ENCODE measurements at regions of chr2 and their contacts with region 1.

Region 1: GRCh38 chr2:112726497-112727190 is 5.8 kb downstream of the NT5DC4 start:
- DNase-seq: peak; percentile 86
- ATAC-seq: peak; percentile 96
- H3K4me3 ChIP-seq: no peak overlapping the region
- H3K27ac ChIP-seq: no peak overlapping the region
- H3K4me1 ChIP-seq: peaks cover 1% of the 10 kb centered on the region; the same call in 1 of the 2 replicates
- H3K27me3 ChIP-seq: no peaks in the 10 kb centered on the region
- CTCF ChIP-seq: peak; percentile 99
- POLR2A ChIP-seq: peak; percentile 49; the same call in 1 of the 2 replicates
- RAD21 ChIP-seq: peak; percentile 100

Region 2: DNA sequence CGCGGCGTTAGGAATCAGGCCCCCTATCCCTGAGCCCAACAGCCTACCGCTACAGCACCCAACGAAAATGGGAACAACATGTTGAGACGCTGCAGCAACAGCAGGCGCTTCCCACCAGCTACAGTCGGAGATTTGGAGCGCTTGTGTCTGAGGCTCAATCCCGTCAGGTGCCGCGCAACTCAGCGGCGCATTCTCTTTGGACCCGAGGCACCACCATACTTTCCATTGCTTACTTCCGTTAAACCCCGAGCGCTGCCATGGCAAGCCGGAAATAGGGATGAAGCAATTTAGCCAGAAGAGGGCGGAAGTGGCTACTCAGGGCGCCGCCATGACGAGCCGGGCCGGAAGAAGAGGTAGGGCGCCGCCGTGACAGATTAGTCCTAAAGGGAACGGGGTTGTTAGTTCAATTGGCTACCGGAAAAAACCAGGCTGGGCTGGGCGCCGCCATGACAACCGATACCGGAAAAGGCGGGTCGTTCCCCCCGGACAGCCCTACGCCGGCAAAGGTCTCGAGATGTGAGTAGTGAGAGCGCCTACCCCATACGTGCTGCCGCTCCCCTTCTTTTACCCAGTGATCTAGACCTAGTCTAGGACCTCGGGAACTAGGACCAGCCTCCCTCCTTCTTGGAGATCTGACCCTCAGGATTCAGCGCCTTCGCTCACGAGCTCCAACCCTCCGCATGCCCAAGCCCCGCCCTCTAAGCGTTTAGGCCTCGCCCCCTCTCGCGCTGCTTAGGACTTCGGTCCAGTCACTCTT is 142.3 kb before region 1 on chr2 and contains the start of gene CHCHD5:
- CTCF ChIA-PET with region 1: interaction called, 4 read pairs
- POLR2A ChIA-PET with region 1: no interaction called
- dilution Hi-C with region 1: no loop called
- in situ Hi-C with region 1: no loop called
- intact Hi-C with region 1: loop called (anchors 5 kb)
- DNase-seq: peak; percentile 94
- ATAC-seq: peak; percentile 89
- H3K4me3 ChIP-seq: peak within 1 kb of the TSS; percentile 56
- H3K27ac ChIP-seq: peak within 1 kb of the TSS; percentile 84
- H3K4me1 ChIP-seq: peaks cover 6% of the 10 kb centered on the region
- H3K27me3 ChIP-seq: no peaks in the 10 kb centered on the region
- CTCF ChIP-seq: peak; percentile 25; the same call in 1 of the 2 replicates
- POLR2A ChIP-seq: peak; percentile 89
- RAD21 ChIP-seq: no peak
- total RNA-seq, gene CHCHD5: 4.8 and 8.1 TPM in 2 replicates

Region 3: DNA sequence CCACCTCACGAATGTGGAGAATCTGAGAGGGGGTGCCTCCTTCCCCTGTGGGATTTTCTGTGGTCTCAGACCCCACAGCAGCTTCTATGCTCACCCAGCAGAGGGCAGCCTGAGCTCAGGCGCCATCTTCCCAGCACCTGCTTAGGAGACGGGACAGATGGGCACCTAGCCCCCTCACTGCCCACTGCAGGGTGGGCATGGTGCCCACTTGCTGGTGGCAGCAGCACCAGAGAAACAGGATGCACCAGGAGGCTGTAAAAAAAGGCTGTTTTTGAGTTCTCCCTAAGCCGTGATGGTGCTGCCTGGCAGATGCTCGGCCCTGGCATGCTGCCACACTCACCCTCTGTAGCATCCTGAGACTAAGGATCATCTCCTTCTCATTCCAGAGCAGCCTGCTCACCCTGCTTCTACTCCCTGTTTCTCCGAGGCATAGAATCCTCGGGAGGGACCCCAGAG is 100.0 kb before region 1 on chr2:
- CTCF ChIA-PET with region 1: interaction called, 15 read pairs
- POLR2A ChIA-PET with region 1: no interaction called
- dilution Hi-C with region 1: no loop called
- in situ Hi-C with region 1: no loop called
- intact Hi-C with region 1: loop called (anchors 1 kb)
- DNase-seq: peak; percentile 68
- ATAC-seq: peak; percentile 54
- H3K4me3 ChIP-seq: no peak overlapping the region; the same call in 1 of the 2 replicates
- H3K27ac ChIP-seq: peak overlapping the region; percentile 79
- H3K4me1 ChIP-seq: peaks cover 29% of the 10 kb centered on the region
- H3K27me3 ChIP-seq: no peaks in the 10 kb centered on the region
- CTCF ChIP-seq: peak; percentile 79
- POLR2A ChIP-seq: no peak; the same call in 1 of the 2 replicates
- RAD21 ChIP-seq: peak; percentile 86

Measured in IMR-90 (cell line).